Heart left ventricle (tissue), 16 donors: ENCODE measurements at regions of chr18 and their contacts with region 1.

Region 1: GRCh38 chr18:33596178-33596854 is 18.3 kb downstream of the ASXL3 start:
- DNase-seq: no peak
- ATAC-seq: peak in 1 of 4 donors; percentile 65
- H3K4me3 ChIP-seq: no peak overlapping the region
- H3K27ac ChIP-seq: no peak overlapping the region
- H3K4me1 ChIP-seq: no peaks in the 10 kb centered on the region
- H3K27me3 ChIP-seq: no peaks in the 10 kb centered on the region
- CTCF ChIP-seq: no peak
- POLR2A ChIP-seq: no peak

Region 2: GRCh38 chr18:33532978-33533377 is 63.3 kb before region 1 on chr18:
- intact Hi-C with region 1: no loop called
- DNase-seq: no peak
- ATAC-seq: no peak
- H3K4me3 ChIP-seq: no peak overlapping the region
- H3K27ac ChIP-seq: no peak overlapping the region
- H3K4me1 ChIP-seq: no peaks in the 10 kb centered on the region
- H3K27me3 ChIP-seq: no peaks in the 10 kb centered on the region
- CTCF ChIP-seq: no peak
- POLR2A ChIP-seq: no peak

Region 3: GRCh38 chr18:33666915-33667314 is 70.6 kb after region 1 on chr18:
- intact Hi-C with region 1: loop called in 1 of 10 experiments (anchors 10 kb)
- DNase-seq: no peak
- ATAC-seq: peak in 1 of 4 donors; percentile 29
- H3K4me3 ChIP-seq: no peak overlapping the region
- H3K27ac ChIP-seq: no peak overlapping the region
- H3K4me1 ChIP-seq: no peaks in the 10 kb centered on the region
- H3K27me3 ChIP-seq: no peaks in the 10 kb centered on the region
- CTCF ChIP-seq: no peak
- POLR2A ChIP-seq: no peak

Region 4: GRCh38 chr18:33729556-33729955 is 133.2 kb after region 1 on chr18:
- intact Hi-C with region 1: no loop called
- DNase-seq: no peak
- ATAC-seq: no peak
- H3K4me3 ChIP-seq: no peak overlapping the region
- H3K27ac ChIP-seq: no peak overlapping the region
- H3K4me1 ChIP-seq: no peaks in the 10 kb centered on the region
- H3K27me3 ChIP-seq: no peaks in the 10 kb centered on the region
- CTCF ChIP-seq: no peak
- POLR2A ChIP-seq: no peak

Region 5: DNA sequence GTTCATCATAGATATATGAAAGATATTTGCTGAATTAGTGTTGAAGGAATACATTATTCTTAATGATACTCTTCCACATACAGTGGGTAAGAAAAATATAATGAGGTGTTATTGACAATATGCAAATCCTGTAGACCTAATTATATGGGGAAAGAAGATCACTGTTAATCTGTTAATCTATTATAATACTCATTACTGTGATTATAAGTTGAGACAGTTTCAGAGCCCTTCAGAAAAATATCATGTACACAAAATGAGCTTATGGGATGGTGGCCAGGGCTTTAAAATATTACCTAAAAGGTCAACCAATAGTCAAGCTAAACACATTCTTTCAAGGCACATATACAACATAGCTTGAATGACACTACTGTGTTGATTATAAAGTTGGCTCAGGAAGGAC is 464.9 kb after region 1 on chr18:
- intact Hi-C with region 1: no loop called
- DNase-seq: no peak
- ATAC-seq: no peak
- H3K4me3 ChIP-seq: no peak overlapping the region
- H3K27ac ChIP-seq: no peak overlapping the region
- H3K4me1 ChIP-seq: no peaks in the 10 kb centered on the region
- H3K27me3 ChIP-seq: no peaks in the 10 kb centered on the region
- CTCF ChIP-seq: no peak
- POLR2A ChIP-seq: no peak